ENCODE measurements at regions of chr11 and their contacts with region 1.

Region 1: DNA sequence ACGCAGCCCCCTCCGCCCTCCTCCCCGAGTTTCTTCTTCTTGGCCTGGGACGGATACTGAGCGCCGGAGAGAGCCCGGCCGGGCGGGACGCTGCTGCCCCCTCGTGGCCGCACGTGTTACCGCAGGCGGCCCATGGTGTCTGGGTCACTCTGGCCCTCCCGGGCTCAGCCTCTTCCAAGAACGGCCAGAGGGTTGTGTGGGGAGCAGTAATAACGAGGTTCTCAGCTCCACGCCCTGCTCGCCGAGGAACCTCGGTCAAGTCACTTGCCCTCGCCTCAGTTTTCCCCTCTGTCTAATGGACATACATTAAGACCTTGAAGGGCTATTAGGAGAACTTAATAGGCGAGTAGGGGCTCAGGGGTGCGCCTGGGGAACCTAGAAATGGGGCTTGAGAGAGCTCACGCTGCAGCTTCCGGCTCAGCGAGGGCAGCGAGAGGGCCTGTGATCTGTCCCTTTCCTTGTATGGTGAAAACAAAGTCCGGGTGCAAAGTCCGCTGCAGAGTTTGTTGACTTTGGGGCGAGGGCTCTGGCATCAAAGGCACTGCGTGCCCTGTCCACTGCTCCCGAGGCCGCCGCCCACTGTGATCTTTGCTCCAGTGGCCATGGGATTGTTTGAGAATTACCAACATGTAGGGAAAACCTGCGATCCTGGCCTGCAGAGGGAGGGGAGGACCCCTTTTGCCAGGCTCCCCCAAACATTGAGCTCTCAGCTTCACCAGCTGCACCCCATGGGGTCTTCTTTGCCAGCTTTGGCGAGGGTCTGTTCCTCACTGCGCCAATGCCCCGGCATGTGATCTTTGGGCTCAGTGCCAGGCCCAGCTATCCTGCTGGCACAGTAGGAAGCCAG is 14.4 kb upstream of the LRP5 start:
- DNase-seq: peak; percentile 38 to 96
- H3K4me3 ChIP-seq: no peak overlapping the region
- H3K27ac ChIP-seq: no peak overlapping the region
- H3K4me1 ChIP-seq: peaks cover 0 to 2% (median 0%) of the 10 kb centered on the region in 4 experiments; a peak in 2 of 7 replicates
- H3K27me3 ChIP-seq: no peaks in the 10 kb centered on the region; a peak in 2 of 7 replicates
- CTCF ChIP-seq: peak; percentile 94 to 98 (median 96)
- EP300 ChIP-seq: no peak
- POLR2A ChIP-seq: no peak
- RAD21 ChIP-seq: peak; percentile 93 to 98

Region 2: GRCh38 chr11:68206187-68206601 is 91.8 kb before region 1 on chr11:
- CTCF ChIA-PET with region 1: interaction called, 34 read pairs
- POLR2A ChIA-PET with region 1: interaction called, 8 read pairs
- DNase-seq: peak in 1 of 2 experiments; percentile 52
- H3K4me3 ChIP-seq: no peak overlapping the region
- H3K27ac ChIP-seq: no peak overlapping the region
- H3K4me1 ChIP-seq: peaks cover 2 to 11% (median 4%) of the 10 kb centered on the region in 4 experiments; a peak in 6 of 7 replicates
- H3K27me3 ChIP-seq: no peaks in the 10 kb centered on the region
- CTCF ChIP-seq: peak in 2 of 3 experiments; percentile 65 to 80; a peak in 3 of 4 replicates
- EP300 ChIP-seq: no peak
- POLR2A ChIP-seq: no peak
- RAD21 ChIP-seq: peak; percentile 60 to 73

Region 3: GRCh38 chr11:68251765-68252164 is 46.3 kb before region 1 on chr11:
- CTCF ChIA-PET with region 1: interaction called, 141 read pairs
- POLR2A ChIA-PET with region 1: no interaction called
- DNase-seq: no peak
- H3K4me3 ChIP-seq: no peak overlapping the region
- H3K27ac ChIP-seq: no peak overlapping the region
- H3K4me1 ChIP-seq: peaks cover 0 to 7% (median 4%) of the 10 kb centered on the region in 4 experiments; a peak in 5 of 7 replicates
- H3K27me3 ChIP-seq: no peaks in the 10 kb centered on the region
- CTCF ChIP-seq: no peak
- EP300 ChIP-seq: no peak
- POLR2A ChIP-seq: no peak
- RAD21 ChIP-seq: no peak

Region 4: GRCh38 chr11:68266121-68266891 is 31.7 kb before region 1 on chr11:
- CTCF ChIA-PET with region 1: interaction called, 141 read pairs
- POLR2A ChIA-PET with region 1: interaction called, 3 read pairs
- DNase-seq: no peak
- H3K4me3 ChIP-seq: no peak overlapping the region
- H3K27ac ChIP-seq: no peak overlapping the region
- H3K4me1 ChIP-seq: peaks cover 0 to 3% (median 1%) of the 10 kb centered on the region in 4 experiments; a peak in 3 of 7 replicates
- H3K27me3 ChIP-seq: no peaks in the 10 kb centered on the region
- CTCF ChIP-seq: no peak
- EP300 ChIP-seq: no peak
- POLR2A ChIP-seq: no peak
- RAD21 ChIP-seq: no peak

Region 5: DNA sequence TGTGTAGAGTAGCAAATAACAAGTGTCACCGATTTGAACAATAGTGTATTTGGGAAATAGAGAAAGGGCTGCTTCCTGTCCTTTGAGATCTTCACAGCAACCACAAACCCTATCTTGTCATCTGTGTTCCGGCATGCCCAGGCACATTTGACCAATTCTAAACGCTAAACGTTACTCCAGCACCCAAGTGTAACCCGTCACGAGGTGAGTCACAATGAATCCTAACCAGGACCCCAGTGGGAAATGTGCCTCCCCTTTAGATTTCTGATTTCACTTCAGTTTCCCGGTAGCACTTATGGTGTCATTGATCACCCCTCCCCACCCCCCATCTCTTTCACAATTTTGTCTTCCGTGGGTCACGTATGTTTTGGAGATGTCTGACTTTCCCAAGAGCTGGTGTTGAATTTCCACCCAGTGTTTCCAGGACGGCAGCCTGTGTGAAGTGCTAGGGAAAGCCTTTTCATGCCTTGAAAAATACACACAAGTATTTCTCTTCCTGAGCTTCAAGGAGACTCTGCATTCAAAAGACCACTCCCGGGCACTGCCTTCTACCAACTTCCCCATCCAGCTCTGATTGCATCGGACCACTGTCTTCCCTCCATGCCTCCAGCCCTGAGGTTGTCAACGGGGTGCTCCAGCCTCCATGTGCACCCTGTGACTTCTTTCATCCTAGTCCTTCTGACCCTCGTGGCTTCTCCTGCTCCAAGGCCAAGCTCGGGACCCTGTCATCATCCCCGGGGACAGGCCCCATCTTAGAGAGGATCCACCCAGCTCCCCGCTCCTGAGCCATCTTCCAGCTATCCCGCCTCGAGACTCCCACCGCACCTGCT is 15.7 kb before region 1 on chr11:
- CTCF ChIA-PET with region 1: interaction called, 30 read pairs
- POLR2A ChIA-PET with region 1: interaction called, 3 read pairs
- DNase-seq: no peak
- H3K4me3 ChIP-seq: no peak overlapping the region
- H3K27ac ChIP-seq: no peak overlapping the region
- H3K4me1 ChIP-seq: no peaks in the 10 kb centered on the region
- H3K27me3 ChIP-seq: no peaks in the 10 kb centered on the region
- CTCF ChIP-seq: no peak
- EP300 ChIP-seq: no peak
- POLR2A ChIP-seq: no peak
- RAD21 ChIP-seq: no peak

Region 6: GRCh38 chr11:68312117-68312779 is 14.2 kb after region 1 on chr11 and contains the start of gene LRP5:
- CTCF ChIA-PET with region 1: interaction called, 19 read pairs
- POLR2A ChIA-PET with region 1: interaction called, 6 read pairs
- DNase-seq: no peak
- H3K4me3 ChIP-seq: peak within 1 kb of the TSS; percentile 58 to 84 (median 70)
- H3K27ac ChIP-seq: no peak within 1 kb of the TSS
- H3K4me1 ChIP-seq: peaks cover 8 to 36% (median 25%) of the 10 kb centered on the region in 4 experiments
- H3K27me3 ChIP-seq: peaks cover 0 to 8% (median 3%) of the 10 kb centered on the region in 4 experiments; a peak in 3 of 7 replicates
- CTCF ChIP-seq: no peak
- EP300 ChIP-seq: no peak
- POLR2A ChIP-seq: no peak
- RAD21 ChIP-seq: no peak
- total RNA-seq, gene LRP5: 35.4 and 38.9 TPM in 2 replicates

Region 7: GRCh38 chr11:68370211-68371111 is 72.4 kb after region 1 on chr11:
- CTCF ChIA-PET with region 1: interaction called, 19 read pairs
- POLR2A ChIA-PET with region 1: no interaction called
- DNase-seq: no peak
- H3K4me3 ChIP-seq: no peak overlapping the region
- H3K27ac ChIP-seq: no peak overlapping the region
- H3K4me1 ChIP-seq: no peaks in the 10 kb centered on the region
- H3K27me3 ChIP-seq: no peaks in the 10 kb centered on the region
- CTCF ChIP-seq: no peak
- EP300 ChIP-seq: no peak
- POLR2A ChIP-seq: no peak
- RAD21 ChIP-seq: no peak